Ascending aorta (tissue), 2 donors: ENCODE measurements at regions of chr12 and their contacts with region 1.

Region 1: DNA sequence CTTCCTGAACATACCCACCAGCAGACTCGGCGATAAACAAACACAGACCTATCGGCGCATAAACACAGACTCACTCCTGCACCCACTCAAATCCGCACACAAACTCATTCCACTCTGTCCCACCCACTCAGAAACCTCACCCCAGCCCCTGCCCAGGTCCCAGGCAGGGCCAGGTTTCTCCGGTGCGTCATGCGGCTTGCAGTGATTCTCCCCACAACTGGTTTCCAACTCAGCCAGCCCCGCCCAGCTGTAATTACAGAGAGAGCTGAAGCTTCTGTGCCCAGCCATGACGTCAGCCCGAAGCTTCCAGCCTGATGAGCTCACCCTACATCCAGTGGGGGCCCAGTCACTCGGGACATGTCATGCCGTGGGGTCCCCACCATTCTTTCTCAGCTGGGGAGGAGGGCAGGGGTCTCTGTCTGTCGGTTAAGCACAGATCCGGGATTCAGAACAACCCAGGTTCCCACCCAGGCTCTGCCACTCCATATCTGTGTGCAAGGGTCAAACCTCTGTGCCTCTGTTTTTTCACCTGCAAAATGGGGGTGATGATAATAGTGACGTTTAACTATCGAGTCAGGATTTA is 2.4 kb upstream of the HSPB8 start:
- DNase-seq: peak; percentile 90 to 99
- H3K4me3 ChIP-seq: peak overlapping the region; percentile 38 to 71
- H3K27ac ChIP-seq: peak overlapping the region; percentile 96 to 97
- H3K4me1 ChIP-seq: peaks cover 4 to 25% of the 10 kb centered on the region in 2 donors
- H3K27me3 ChIP-seq: no peaks in the 10 kb centered on the region
- CTCF ChIP-seq: no peak

Region 2: DNA sequence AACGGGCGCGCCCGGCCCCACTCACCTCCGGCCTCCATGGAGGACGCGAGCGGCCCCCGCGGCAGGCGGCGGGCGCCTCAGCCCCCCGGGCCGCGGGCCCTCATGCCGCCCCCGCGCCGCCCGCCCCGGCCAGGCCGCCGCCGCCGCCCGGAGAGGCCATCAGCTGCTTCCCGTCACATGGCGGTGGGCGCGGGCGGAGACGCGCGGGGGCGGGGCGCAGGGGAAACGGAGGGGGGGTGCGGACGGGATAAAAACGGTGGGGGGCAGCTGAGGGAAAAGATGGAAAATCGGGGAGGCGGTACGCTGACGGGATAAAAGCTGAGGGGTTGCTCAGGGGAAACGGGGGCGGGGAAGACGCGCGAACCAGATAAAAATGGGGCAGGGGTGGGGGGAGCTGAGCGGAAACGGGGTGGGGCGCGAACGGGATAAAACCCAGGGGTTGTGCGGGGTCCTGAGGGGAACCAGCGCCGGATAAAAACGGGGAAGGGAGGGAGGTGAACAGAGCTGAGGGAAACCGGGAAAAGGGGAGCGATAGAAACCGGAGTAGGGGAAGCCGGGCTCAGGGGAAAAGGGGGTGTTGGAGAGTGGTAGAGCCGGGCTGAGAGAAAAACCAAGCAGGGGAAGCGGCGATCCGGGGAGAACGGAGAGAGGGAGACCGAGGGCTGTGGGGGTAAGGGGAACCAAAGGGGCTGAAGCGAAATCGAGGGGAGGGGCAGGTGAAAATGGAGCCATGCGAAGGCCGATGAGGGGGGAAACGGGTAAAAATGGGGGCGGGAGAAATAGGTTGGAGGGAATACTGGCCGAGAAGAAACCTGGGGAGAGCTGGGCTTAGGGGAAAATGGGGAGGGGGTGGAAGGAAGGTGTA is 1115.1 kb before region 1 on chr12 and contains the start of gene WSB2:
- intact Hi-C with region 1: loop called (anchors 5 kb)
- DNase-seq: peak in 1 of 2 donors; percentile 88
- H3K4me3 ChIP-seq: peak within 1 kb of the TSS; percentile 75 to 86
- H3K27ac ChIP-seq: peak within 1 kb of the TSS; percentile 95 to 99
- H3K4me1 ChIP-seq: peaks cover 0 to 8% of the 10 kb centered on the region in 2 donors
- H3K27me3 ChIP-seq: no peaks in the 10 kb centered on the region
- CTCF ChIP-seq: no peak
- total RNA-seq, gene WSB2: 68.6 TPM

Region 3: GRCh38 chr12:119115296-119115905 is 61.0 kb before region 1 on chr12:
- intact Hi-C with region 1: loop called (anchors 2 kb)
- DNase-seq: peak in 1 of 2 donors; percentile 66
- H3K4me3 ChIP-seq: no peak overlapping the region
- H3K27ac ChIP-seq: no peak overlapping the region
- H3K4me1 ChIP-seq: no peaks in the 10 kb centered on the region
- H3K27me3 ChIP-seq: no peaks in the 10 kb centered on the region
- CTCF ChIP-seq: peak; percentile 73 to 95 (median 93)

Region 4: DNA sequence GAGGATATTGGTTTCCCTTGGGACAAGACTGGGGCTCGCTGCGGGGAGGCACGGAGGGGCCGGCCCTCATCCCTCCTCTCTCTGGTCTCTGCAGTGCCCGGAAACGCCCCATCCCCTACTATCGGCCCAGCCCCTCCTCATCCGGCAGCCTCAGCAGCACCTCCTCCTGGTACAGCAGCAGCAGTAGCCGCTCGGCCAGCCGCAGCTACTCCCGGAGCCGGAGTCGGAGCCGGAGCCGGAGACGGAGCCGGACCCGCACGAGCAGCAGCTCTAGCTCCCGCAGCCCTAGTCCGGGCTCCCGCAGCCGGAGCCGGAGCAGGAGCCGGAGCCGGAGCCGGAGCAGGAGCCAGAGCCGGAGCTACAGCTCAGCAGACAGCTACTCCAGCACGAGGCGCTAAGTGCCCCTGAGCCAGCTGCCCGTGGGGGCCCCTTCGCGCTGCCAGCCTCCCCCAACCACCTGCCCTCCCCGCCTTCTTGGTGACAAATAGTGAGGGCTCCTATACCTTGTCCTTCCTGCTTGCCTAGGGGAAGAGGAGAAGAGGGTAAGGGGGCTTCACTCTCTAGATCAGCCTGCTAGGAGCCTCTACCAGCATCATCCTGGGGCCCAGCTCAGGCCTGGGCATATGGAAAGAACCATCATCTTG is 19.8 kb before region 1 on chr12:
- intact Hi-C with region 1: loop called (anchors 1 kb)
- DNase-seq: peak in 1 of 2 donors; percentile 79
- H3K4me3 ChIP-seq: peak overlapping the region; percentile 41 to 45
- H3K27ac ChIP-seq: peak overlapping the region; percentile 89 to 97
- H3K4me1 ChIP-seq: peaks cover 7 to 15% of the 10 kb centered on the region in 2 donors
- H3K27me3 ChIP-seq: no peaks in the 10 kb centered on the region
- CTCF ChIP-seq: peak in 2 of 3 experiments; percentile 39 to 40

Region 5: GRCh38 chr12:119328111-119328510 is 151.8 kb after region 1 on chr12:
- intact Hi-C with region 1: loop called (anchors 5 kb)
- DNase-seq: no peak
- H3K4me3 ChIP-seq: no peak overlapping the region
- H3K27ac ChIP-seq: peak overlapping the region in 1 of 2 donors; percentile 42
- H3K4me1 ChIP-seq: peaks cover 0 to 16% of the 10 kb centered on the region in 2 donors
- H3K27me3 ChIP-seq: no peaks in the 10 kb centered on the region
- CTCF ChIP-seq: peak; percentile 8 to 40 (median 34)

Region 6: GRCh38 chr12:119412811-119413794 is 236.7 kb after region 1 on chr12:
- intact Hi-C with region 1: loop called (anchors 5 kb)
- DNase-seq: peak in 1 of 2 donors; percentile 75
- H3K4me3 ChIP-seq: no peak overlapping the region
- H3K27ac ChIP-seq: no peak overlapping the region
- H3K4me1 ChIP-seq: peaks cover 0 to 3% of the 10 kb centered on the region in 2 donors
- H3K27me3 ChIP-seq: no peaks in the 10 kb centered on the region
- CTCF ChIP-seq: peak; percentile 64 to 85 (median 83)